Mammary epithelial cell (primary cell): ENCODE measurements at regions of chr4 and their contacts with region 1.

Region 1: DNA sequence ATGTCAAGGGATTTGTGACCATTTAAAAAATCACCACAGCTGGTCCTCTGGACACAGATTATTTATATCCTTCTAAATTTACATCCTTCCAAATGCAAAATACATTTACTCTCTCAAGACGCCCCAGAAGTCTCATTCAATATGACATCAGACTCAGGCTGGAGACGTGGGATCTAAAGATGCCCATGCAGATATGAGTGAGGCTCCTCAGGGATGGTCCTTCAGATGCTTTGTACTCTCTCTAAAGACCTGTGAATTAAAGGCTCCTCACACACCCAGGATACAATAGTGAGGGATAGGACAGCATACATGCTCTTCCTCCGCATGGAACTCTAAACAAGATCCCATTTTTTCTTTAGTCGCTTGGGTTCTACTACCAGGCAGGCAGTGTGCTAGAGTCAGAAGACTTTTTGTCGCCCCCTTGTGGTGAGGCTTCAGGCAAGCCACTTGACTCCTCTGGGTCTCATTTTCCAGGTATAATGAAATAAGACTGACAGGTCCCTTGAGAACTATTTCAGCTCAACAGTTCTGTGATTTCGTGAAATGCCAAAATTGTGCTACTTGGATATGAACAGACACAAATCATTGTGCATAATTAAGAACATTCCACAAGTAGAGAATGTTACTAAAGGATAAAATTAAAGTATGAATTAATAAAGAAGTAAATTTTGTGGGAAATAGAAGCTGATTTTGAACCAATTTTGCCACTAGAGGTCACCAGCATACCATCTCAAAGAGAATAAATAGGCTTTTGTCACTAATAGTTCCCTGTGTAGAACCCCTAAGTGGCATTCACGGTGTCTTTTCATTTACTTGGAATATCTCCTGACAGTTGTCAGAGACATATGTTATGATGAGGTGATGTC is 13.7 kb upstream of the SCOC start:
- DNase-seq: peak; percentile 71
- H3K4me3 ChIP-seq: no peak overlapping the region
- H3K27ac ChIP-seq: no peak overlapping the region
- H3K4me1 ChIP-seq: no peaks in the 10 kb centered on the region
- H3K27me3 ChIP-seq: peaks cover 3% of the 10 kb centered on the region
- CTCF ChIP-seq: peak; percentile 78 to 82

Region 2: DNA sequence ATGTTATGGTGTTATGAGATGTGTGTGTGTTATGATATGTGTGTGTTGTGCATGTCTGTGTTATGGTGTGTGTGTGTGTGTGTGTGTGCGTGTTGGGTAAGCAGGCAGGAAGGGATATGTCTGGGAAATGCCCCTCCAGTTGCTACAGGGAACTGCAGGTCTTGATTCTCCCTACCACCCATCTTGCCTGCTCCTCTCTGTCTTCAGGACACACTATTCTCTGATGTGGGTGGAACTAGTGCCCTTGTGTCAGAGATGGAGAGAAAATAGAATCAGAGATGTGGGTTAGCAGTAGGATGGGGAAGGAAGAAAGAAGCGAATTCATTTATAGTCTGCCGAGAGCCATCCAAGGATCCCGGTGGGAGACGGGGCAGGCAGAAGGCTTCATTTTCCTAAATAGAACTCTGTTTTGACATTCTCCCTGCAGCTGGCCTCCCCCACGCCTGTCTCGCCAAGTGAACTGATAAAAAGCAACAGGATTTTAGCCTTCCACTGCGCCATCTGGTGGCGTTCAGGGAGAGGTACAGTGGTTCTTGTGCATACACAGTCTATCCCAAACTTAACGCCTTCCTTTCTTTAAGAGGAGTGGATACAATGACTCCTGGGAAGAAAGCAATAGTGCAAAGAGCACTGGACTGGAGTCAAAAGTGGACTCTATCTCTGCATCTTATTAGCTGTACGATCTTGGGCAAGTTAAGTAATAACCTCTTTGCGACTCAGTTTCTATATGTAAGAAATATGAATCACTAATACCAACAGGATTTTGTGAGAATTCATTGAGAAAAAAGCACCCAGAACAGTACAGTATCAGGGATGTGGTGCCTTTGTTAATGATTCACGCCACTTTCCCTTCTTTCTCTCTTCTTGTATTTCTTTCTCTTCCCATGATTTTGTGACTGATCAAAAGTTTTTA is 708.3 kb before region 1 on chr4:
- CTCF ChIA-PET with region 1: no interaction called
- dilution Hi-C with region 1: no loop called
- in situ Hi-C with region 1: no loop called
- intact Hi-C with region 1: loop called (anchors 10 kb)
- DNase-seq: peak; percentile 43
- H3K4me3 ChIP-seq: no peak overlapping the region
- H3K27ac ChIP-seq: no peak overlapping the region
- H3K4me1 ChIP-seq: peaks cover 8% of the 10 kb centered on the region
- H3K27me3 ChIP-seq: no peaks in the 10 kb centered on the region
- CTCF ChIP-seq: peak; percentile 91 to 95

Region 3: DNA sequence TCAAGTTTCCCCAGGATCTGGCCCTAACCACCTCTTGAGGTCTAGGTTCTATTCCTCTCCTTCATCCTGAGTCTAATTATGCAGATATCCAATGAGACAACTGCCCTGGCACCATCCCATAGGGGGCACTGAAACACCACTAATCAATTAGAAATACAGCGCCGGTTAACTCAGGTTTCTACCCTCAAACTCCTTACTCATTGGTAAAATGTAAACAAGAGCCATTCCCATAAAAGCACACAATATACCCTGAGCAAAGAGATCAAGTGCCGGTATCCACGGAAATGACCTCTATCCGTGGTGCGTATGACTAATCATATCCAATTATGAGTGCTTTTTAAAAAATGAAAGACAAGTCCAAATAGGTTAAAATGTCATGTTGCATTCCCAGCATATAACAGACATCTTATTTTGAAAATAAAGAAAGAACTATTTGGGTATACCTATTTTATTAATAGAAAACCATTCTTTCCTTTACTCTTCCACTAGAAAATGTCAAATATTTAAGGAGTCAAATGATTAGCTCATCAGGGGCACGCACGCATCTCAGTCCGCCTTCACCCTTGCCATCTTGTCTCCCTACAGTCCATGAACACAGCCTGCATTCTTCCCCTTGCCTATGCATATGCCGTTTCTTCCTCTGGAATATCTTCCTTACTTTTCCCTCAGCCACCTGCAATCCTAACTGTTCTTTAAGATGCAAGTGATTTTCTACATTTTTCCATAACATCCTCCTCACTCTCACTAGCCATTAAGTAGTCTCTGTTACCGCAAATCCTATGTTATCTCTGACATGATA is 346.9 kb before region 1 on chr4:
- CTCF ChIA-PET with region 1: interaction called, 4 read pairs
- dilution Hi-C with region 1: no loop called
- in situ Hi-C with region 1: no loop called
- intact Hi-C with region 1: loop called (anchors 1 kb)
- DNase-seq: peak; percentile 71
- H3K4me3 ChIP-seq: no peak overlapping the region
- H3K27ac ChIP-seq: no peak overlapping the region
- H3K4me1 ChIP-seq: no peaks in the 10 kb centered on the region
- H3K27me3 ChIP-seq: peaks cover 2% of the 10 kb centered on the region
- CTCF ChIP-seq: peak; percentile 62 to 64

Region 4: DNA sequence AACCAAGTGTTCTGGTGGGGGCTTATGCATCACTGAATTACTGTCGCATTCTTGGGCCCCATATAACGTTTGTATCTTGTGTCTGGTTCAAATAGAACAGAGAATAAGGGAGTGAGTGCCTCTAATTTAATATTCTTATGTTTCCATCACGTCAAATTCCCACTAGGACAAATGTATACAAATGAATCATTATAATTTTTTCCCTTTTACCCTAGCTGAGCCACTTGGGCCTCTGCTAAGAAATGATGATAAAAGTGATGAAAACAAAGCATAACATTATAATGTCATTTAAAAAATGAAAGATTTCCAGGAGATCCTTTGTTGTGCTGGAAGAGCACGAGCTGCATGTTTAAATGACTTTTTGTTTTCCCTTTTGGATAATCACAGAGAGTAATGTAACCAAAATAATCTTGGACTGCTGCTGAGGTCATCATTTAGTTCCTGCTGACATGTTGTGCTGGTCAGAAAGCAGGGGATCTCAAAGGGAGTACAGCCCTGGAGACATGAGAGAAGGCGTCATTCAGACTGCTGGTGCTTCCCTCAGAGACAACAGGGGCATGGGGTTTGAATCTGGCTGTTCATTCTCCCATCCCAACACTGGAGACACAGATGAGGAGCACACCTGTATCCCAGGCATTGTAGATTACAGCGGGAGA is 91.5 kb before region 1 on chr4:
- CTCF ChIA-PET with region 1: no interaction called
- dilution Hi-C with region 1: no loop called
- in situ Hi-C with region 1: no loop called
- intact Hi-C with region 1: no loop called
- DNase-seq: no peak
- H3K4me3 ChIP-seq: no peak overlapping the region
- H3K27ac ChIP-seq: no peak overlapping the region
- H3K4me1 ChIP-seq: no peaks in the 10 kb centered on the region
- H3K27me3 ChIP-seq: no peaks in the 10 kb centered on the region
- CTCF ChIP-seq: no peak

Region 5: DNA sequence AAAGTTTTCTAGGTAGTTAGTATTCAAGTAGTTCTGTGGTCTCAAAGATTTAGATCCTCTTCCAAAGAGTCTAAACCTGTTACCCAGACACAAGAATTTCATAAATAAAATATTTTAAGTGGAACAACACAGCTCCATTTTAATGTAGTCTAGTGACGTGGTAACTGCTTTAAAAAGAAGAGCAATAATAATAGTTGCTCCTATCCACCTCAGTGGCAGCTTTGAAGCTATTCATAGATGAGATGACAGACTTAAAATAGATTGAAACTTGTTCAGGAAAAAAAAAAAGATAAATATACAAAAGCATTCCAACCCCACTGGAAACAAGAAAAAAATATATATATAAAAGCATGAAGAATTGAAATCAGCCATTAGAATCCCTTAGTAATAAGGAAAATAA is 28.2 kb after region 1 on chr4:
- CTCF ChIA-PET with region 1: no interaction called
- dilution Hi-C with region 1: no loop called
- in situ Hi-C with region 1: no loop called
- intact Hi-C with region 1: no loop called
- DNase-seq: no peak
- H3K4me3 ChIP-seq: no peak overlapping the region
- H3K27ac ChIP-seq: no peak overlapping the region
- H3K4me1 ChIP-seq: no peaks in the 10 kb centered on the region
- H3K27me3 ChIP-seq: peaks cover 4% of the 10 kb centered on the region
- CTCF ChIP-seq: no peak

Region 6: GRCh38 chr4:140523857-140524742 is 164.3 kb after region 1 on chr4 and contains the start of gene ELMOD2:
- CTCF ChIA-PET with region 1: no interaction called
- dilution Hi-C with region 1: no loop called
- in situ Hi-C with region 1: no loop called
- intact Hi-C with region 1: loop called (anchors 5 kb)
- DNase-seq: peak; percentile 97
- H3K4me3 ChIP-seq: peak within 1 kb of the TSS; percentile 68 to 85 (median 82)
- H3K27ac ChIP-seq: peak within 1 kb of the TSS; percentile 66
- H3K4me1 ChIP-seq: peaks cover 5% of the 10 kb centered on the region
- H3K27me3 ChIP-seq: no peaks in the 10 kb centered on the region
- CTCF ChIP-seq: peak; percentile 84 to 91
- total RNA-seq, gene ELMOD2: 28.4 to 43.3 TPM

Region 7: GRCh38 chr4:140851032-140851636 is 491.3 kb after region 1 on chr4:
- CTCF ChIA-PET with region 1: interaction called, 5 read pairs
- dilution Hi-C with region 1: no loop called
- in situ Hi-C with region 1: loop called in 1 of 2 experiments (anchors 25 kb)
- intact Hi-C with region 1: loop called (anchors 1 kb)
- DNase-seq: peak; percentile 45
- H3K4me3 ChIP-seq: no peak overlapping the region
- H3K27ac ChIP-seq: no peak overlapping the region
- H3K4me1 ChIP-seq: peaks cover 8% of the 10 kb centered on the region
- H3K27me3 ChIP-seq: no peaks in the 10 kb centered on the region
- CTCF ChIP-seq: peak; percentile 74 to 84

Region 8: GRCh38 chr4:140884431-140885058 is 524.8 kb after region 1 on chr4:
- CTCF ChIA-PET with region 1: no interaction called
- dilution Hi-C with region 1: no loop called
- in situ Hi-C with region 1: no loop called
- intact Hi-C with region 1: loop called (anchors 1 kb)
- DNase-seq: peak; percentile 46
- H3K4me3 ChIP-seq: no peak overlapping the region
- H3K27ac ChIP-seq: no peak overlapping the region
- H3K4me1 ChIP-seq: no peaks in the 10 kb centered on the region
- H3K27me3 ChIP-seq: peaks cover 3% of the 10 kb centered on the region
- CTCF ChIP-seq: peak; percentile 61 to 87